Sigmoid colon (tissue), 7 donors: ENCODE measurements at regions of chr3 and their contacts with region 1.

Region 1: DNA sequence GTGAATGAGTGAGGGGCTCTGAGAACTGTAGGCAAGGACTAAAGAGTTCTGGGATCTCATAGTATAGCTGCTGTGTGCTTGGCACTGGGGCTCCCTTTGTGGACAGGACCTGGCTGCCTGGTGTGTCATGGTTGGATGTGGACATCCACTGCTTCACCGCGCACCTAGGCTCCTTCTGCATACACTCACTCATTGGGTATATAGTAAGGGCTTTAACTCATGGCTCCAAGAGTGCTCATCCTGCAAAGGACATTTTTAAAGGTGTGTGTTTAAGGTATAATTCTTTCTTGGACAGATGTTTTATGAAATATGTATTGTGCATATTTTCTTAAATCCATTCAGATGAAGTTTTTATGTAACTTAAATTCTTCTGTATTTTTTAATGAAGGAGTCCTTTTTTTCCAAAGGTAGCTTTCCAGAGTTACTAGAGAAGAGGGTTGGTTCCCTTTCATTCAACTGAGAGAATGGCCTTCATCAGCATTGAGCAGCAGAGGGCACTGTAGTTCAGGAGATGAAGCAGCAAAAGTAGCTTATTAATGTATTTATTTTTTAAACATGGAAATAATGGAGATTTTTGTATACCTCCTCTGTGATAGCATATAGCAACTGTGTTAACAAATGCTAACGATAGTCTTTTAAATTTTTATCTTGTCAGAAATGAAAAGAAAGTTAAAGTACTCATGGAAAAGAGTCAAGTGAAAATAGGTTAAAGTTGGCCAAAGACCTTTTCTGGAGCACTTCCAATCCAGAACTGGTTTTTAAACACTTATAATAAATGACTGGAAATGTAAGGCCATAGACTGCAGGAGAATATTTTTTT is 25.2 kb downstream of the OXNAD1 start:
- DNase-seq: no peak
- H3K4me3 ChIP-seq: no peak overlapping the region
- H3K27ac ChIP-seq: peak overlapping the region in 1 of 4 donors; percentile 40
- H3K4me1 ChIP-seq: peaks cover 0 to 8% (median 2%) of the 10 kb centered on the region in 4 donors
- H3K27me3 ChIP-seq: no peaks in the 10 kb centered on the region
- CTCF ChIP-seq: peak in 3 of 4 experiments; percentile 52 to 69 (median 62)
- EP300 ChIP-seq: no peak
- POLR2A ChIP-seq: no peak

Region 2: DNA sequence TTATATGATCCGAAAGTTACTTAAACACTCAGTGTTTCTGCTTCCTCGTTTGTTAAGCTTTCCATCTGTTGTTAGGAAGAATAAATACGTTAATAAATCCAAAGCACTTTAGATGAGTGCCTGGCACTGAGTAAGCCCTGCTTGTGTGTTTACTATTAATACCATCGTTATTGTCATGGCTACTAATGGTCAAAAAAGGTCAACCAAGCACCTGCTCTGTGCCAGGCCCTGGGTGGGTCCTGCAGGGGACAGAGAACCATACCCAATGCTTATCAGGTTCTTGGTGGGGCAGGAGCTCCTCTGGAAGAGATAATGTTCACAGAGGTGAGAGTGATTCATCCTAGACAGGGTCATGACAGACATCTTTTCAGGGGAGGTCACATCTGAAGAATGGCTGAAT is 75.9 kb before region 1 on chr3:
- intact Hi-C with region 1: no loop called
- DNase-seq: no peak
- H3K4me3 ChIP-seq: no peak overlapping the region
- H3K27ac ChIP-seq: no peak overlapping the region
- H3K4me1 ChIP-seq: no peaks in the 10 kb centered on the region
- H3K27me3 ChIP-seq: no peaks in the 10 kb centered on the region
- CTCF ChIP-seq: no peak
- EP300 ChIP-seq: no peak
- POLR2A ChIP-seq: no peak

Region 3: DNA sequence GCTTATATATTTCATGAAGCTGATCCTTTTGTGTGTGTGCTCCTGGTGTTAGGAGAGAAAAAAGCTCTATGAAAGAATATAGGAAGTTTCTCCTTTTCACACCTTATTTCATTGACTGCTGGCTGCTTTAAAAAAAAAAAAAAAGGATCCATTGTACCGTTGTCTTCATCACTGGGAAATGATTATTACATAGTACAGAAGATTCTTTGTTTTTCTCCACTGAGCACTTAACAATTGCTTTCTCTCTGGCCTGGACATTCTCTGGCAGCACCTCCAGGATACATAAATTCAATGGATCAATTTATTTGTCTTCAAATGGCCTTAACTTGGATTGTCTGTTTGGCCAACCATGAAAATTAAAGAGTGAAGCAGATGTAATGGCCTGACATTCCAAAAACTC is 62.7 kb before region 1 on chr3:
- intact Hi-C with region 1: no loop called
- DNase-seq: no peak
- H3K4me3 ChIP-seq: no peak overlapping the region
- H3K27ac ChIP-seq: no peak overlapping the region
- H3K4me1 ChIP-seq: no peaks in the 10 kb centered on the region
- H3K27me3 ChIP-seq: no peaks in the 10 kb centered on the region
- CTCF ChIP-seq: no peak
- EP300 ChIP-seq: no peak
- POLR2A ChIP-seq: no peak

Region 4: GRCh38 chr3:16511681-16512434 is 221.6 kb after region 1 on chr3:
- intact Hi-C with region 1: loop called (anchors 10 kb)
- DNase-seq: peak; percentile 73
- H3K4me3 ChIP-seq: peak overlapping the region in 3 of 4 donors; percentile 39 to 73 (median 62)
- H3K27ac ChIP-seq: peak overlapping the region; percentile 63 to 91 (median 68)
- H3K4me1 ChIP-seq: peaks cover 0 to 21% (median 13%) of the 10 kb centered on the region in 4 donors
- H3K27me3 ChIP-seq: peaks cover 0 to 33% (median 0%) of the 10 kb centered on the region in 3 donors
- CTCF ChIP-seq: no peak
- EP300 ChIP-seq: peak in 1 of 4 donors; percentile 9
- POLR2A ChIP-seq: no peak

Region 5: DNA sequence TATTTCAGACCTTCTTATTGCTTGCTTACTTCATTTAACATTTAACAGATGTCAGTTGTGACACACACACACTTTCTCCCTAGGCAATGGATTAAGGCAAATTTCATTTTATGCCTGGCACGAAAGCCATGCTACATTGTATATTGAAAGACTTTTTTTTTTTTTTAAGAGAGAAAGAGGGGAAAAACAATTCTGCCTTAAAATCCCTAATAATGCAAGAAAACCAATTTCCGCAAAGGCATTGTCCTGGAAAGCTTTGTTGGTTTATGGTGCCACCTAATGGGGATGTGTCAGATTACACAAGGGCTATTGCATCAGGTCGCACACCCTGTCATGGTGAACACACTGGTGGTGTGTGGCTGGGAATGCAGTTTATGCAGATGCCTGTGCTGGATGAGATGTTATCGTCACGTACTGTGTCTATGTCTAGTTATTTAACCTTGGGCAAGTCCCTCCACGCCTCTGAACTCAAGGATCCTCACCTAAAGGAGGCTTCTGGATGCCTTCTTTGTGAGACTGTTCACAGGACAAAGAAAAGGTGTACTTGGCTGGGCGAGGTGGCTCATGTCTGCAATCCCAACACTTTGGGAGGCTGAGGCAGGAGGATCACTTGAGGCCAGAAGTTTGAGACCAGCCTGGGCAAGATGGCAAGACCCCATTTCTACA is 260.6 kb after region 1 on chr3:
- intact Hi-C with region 1: loop called (anchors 2 kb)
- DNase-seq: peak; percentile 79
- H3K4me3 ChIP-seq: peak overlapping the region in 2 of 4 donors; percentile 13 to 22
- H3K27ac ChIP-seq: no peak overlapping the region
- H3K4me1 ChIP-seq: peaks cover 0 to 6% (median 3%) of the 10 kb centered on the region in 4 donors
- H3K27me3 ChIP-seq: no peaks in the 10 kb centered on the region
- CTCF ChIP-seq: peak; percentile 59 to 83 (median 82)
- EP300 ChIP-seq: no peak
- POLR2A ChIP-seq: no peak